PC-9 (cell line): ENCODE measurements at regions of chr3 and their contacts with region 1.

Region 1: DNA sequence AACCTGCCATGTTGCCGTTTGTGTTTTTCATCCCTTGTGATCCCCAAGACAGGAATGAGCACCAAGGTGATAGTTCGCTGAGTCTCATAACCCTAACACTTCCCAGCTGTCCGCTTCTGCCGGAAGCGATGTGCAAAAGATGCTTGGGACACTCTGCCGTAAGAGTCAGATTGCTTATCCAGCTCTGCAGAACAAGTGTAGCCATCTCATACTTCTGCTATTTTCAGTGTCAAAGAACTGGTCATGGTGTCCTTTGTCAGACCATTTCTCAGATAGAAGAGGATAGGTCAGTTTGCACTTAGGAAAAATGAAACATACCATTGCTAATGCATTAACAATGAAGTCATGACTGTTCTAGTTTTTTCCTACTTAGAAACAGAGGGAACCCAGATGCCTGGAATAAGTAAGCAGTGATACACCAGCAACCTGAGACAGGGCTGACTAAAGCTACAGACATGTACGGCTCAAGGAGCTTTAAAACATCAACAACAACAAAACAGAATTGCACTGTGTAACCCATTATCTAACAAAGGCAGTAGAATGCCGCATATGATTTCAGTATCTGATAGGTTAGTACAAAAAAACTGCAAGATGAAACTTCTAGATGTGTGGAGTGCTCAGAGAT is 134.0 kb upstream of the IL12A start:
- DNase-seq: peak; percentile 64 to 99
- H3K4me3 ChIP-seq: peak overlapping the region; percentile 22; the same call in 1 of the 2 replicates
- H3K27ac ChIP-seq: peak overlapping the region; percentile 71
- H3K4me1 ChIP-seq: peaks cover 38% of the 10 kb centered on the region
- H3K27me3 ChIP-seq: no peaks in the 10 kb centered on the region
- CTCF ChIP-seq: no peak

Region 2: GRCh38 chr3:159458010-159458409 is 396.6 kb before region 1 on chr3:
- CTCF ChIA-PET with region 1: no interaction called
- POLR2A ChIA-PET with region 1: interaction called, 14 read pairs
- intact Hi-C with region 1: no loop called
- DNase-seq: peak; percentile 92 to 96
- H3K4me3 ChIP-seq: no peak overlapping the region
- H3K27ac ChIP-seq: peak overlapping the region; percentile 63
- H3K4me1 ChIP-seq: peaks cover 25% of the 10 kb centered on the region
- H3K27me3 ChIP-seq: no peaks in the 10 kb centered on the region
- CTCF ChIP-seq: no peak

Region 3: DNA sequence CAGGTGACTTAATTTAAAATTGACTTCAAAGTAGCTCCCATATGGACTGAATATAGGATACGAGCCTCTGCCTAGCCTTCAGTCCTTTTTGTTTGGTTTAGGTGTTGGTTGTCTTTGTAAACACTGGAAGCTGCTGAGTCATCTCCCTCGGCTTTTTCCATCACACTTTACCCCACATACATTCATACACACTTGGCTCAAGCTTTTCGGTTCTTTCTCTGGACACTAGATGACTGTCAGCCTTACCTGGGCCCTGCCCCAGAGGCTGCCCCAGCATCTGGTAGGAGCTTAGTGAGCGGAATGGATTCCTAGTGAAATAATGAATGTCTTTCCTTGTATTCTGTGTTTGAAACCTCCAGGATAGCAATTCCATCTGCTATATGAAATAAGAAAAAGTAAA is 67.4 kb before region 1 on chr3:
- CTCF ChIA-PET with region 1: no interaction called
- POLR2A ChIA-PET with region 1: interaction called, 8 read pairs
- intact Hi-C with region 1: loop called (anchors 1 kb)
- DNase-seq: peak; percentile 82 to 98
- H3K4me3 ChIP-seq: peak overlapping the region; percentile 30; the same call in 1 of the 2 replicates
- H3K27ac ChIP-seq: peak overlapping the region; percentile 90
- H3K4me1 ChIP-seq: peaks cover 64% of the 10 kb centered on the region
- H3K27me3 ChIP-seq: no peaks in the 10 kb centered on the region
- CTCF ChIP-seq: no peak

Region 4: GRCh38 chr3:159813822-159814523 is 40.6 kb before region 1 on chr3:
- CTCF ChIA-PET with region 1: no interaction called
- POLR2A ChIA-PET with region 1: no interaction called
- intact Hi-C with region 1: loop called (anchors 1 kb)
- DNase-seq: peak; percentile 79 to 97
- H3K4me3 ChIP-seq: 0 out of 2 replicates have a peak overlapping the region, but pooled peaks have one; percentile 18
- H3K27ac ChIP-seq: peak overlapping the region; percentile 52
- H3K4me1 ChIP-seq: peaks cover 51% of the 10 kb centered on the region
- H3K27me3 ChIP-seq: no peaks in the 10 kb centered on the region
- CTCF ChIP-seq: no peak

Region 5: DNA sequence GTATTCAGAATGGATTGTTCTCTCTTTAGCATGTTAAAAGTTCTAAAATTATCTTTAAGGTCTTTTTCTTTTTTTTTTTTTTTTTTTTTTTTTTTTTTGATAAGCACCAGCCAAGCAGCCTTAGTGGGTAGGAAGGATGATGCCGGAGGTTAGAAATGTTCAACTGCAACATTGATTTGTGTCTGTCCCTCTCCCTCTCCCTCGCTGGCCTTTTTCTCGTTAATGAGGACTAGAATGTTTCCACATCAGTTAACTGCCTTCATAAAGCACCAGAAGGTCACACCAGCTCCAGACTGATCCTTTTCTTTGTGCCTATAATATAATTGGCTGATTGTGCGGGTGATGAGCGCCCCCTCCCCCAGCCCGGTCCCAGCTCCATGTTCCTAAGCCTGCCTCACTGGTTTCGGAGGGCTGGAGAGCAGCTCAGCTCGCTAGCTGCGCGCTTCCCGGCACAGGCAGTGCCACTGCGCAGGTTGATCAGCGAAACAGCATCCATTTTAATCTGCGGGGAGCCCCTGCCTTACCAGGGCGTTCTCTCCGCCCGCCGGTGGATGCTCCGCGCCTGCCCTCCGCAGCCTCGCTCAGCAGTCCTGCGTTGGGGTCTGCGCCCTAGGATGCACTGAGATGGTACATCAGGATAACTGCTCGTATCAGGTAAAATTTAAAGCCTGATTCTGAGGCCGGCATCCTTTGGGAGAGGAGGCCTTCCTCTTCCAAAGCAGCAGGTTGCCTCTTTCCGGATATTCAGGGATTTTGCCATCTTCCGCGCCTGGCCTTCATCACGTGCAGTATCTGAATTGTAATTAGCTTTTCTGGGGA is 14.8 kb before region 1 on chr3:
- CTCF ChIA-PET with region 1: interaction called, 5 read pairs
- POLR2A ChIA-PET with region 1: no interaction called
- intact Hi-C with region 1: loop called (anchors 1 kb)
- DNase-seq: no peak
- H3K4me3 ChIP-seq: no peak within 1 kb of the TSS
- H3K27ac ChIP-seq: peak within 1 kb of the TSS; percentile 32
- H3K4me1 ChIP-seq: peaks cover 30% of the 10 kb centered on the region
- H3K27me3 ChIP-seq: no peaks in the 10 kb centered on the region
- CTCF ChIP-seq: no peak

Region 6: DNA sequence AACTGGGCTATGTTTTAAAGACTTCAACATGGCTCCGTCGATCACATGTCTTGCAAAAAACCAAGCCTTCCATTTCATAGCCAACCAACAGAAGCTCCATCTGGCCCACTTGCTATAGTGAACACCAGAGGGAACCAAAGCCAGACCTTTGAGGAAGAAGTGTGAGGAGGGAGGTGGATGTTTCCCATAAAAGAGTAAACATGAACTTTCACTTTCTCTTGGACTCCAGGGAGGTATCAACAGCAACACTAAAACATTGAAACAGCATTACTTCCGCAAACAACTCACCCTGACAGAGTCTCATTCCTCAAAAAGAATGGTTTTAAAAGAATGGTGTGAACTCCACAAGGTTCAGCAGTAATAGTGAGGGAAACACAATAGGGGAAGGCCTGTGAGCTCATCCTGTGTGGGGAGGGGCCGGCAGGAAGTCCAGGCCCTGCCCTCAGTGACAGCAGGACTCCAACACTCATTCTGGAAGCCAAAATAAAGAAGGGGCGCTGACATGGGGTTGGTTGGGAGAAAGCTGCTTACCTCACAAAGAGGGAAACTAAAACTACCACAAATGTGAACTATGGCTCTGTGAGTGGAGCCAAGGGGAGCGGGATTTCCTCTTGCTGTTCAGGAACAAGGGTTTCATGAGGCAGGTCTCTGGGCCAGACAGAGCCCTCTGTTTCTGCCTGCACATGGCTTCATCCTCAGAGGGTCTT is 75.0 kb after region 1 on chr3:
- CTCF ChIA-PET with region 1: interaction called, 3 read pairs
- POLR2A ChIA-PET with region 1: interaction called, 3 read pairs
- intact Hi-C with region 1: loop called (anchors 2 kb)
- DNase-seq: peak; percentile 51 to 93
- H3K4me3 ChIP-seq: peak overlapping the region; percentile 27; the same call in 1 of the 2 replicates
- H3K27ac ChIP-seq: peak overlapping the region; percentile 94
- H3K4me1 ChIP-seq: peaks cover 46% of the 10 kb centered on the region
- H3K27me3 ChIP-seq: no peaks in the 10 kb centered on the region
- CTCF ChIP-seq: peak; percentile 62

Region 7: DNA sequence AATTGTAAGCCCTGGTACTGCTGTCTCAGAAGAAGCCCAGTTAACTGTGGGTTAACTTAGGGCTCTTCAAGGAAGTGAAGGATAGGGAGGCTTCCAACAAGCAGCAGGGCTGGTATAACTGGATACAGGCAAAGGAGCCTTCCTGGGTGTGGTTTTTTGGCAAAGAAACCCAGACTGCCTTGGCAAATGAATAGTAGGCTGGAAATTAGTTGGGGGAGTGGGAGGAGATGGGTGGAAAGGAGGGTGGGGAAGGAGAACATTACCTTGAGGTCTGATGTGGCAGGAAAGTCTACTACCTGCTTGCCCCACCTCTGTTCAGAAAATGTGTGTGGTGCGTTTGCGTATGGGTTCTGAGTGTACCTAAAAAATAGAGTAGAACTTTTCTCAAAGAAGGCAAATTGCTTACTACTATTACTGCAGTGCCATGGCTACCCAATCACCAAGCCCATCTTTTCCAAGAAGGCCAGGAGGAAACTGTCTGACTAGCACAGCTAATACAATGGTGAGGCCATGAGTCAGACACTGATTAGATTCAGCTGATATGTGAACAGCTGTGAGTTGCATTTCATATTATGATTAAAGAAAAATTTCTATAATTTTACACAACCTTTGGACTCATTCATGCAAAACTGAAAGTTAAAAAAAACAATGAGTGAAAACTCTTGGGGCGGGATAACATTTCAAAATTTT is 1461.5 kb after region 1 on chr3:
- CTCF ChIA-PET with region 1: no interaction called
- POLR2A ChIA-PET with region 1: no interaction called
- intact Hi-C with region 1: loop called (anchors 1 kb)
- DNase-seq: peak; percentile 82 to 88
- H3K4me3 ChIP-seq: no peak overlapping the region
- H3K27ac ChIP-seq: peak overlapping the region; percentile 64
- H3K4me1 ChIP-seq: peaks cover 32% of the 10 kb centered on the region
- H3K27me3 ChIP-seq: no peaks in the 10 kb centered on the region
- CTCF ChIP-seq: no peak